ENCODE measurements at regions of chr15 and their contacts with region 1.

Region 1: DNA sequence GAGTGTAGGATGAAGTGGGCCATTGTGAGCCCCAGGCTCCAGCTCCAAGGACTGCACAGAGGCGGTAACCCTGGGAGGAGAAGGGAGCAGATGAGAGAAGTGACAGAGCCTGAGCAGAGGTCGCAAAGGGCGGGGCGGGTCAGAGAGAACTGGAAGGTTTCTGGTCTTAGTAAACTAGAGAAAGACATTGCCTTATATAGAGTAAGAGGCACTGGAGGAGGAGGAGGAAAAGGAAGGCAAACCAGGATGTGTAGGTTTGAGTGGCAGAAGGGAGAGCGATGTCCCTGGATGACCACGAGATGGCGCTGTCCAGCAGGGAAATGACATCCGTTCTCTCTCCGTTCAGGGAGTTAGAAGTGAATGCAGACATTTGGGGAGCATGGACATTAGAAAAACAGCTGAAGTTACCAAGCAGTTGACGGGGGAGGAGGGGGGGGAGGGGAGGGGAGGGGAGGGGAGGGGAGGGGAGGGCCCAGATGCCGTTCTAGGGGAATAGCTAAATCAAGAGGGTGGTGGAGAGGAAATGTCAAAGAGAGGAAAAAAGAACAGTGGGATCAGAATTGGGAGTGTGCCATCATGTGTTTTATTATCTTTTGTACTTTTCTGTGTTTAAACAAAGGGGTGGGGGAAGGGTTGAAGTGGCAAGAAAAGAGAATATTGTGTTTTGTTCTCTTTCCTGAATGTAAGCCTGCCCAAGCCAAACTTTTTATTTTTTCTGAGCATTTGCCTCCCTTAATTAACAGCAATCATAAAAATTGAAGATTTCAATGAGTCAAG is 48.8 kb downstream of the STARD5 start:
- DNase-seq: peak; percentile 62 to 92 (median 83)

Region 2: DNA sequence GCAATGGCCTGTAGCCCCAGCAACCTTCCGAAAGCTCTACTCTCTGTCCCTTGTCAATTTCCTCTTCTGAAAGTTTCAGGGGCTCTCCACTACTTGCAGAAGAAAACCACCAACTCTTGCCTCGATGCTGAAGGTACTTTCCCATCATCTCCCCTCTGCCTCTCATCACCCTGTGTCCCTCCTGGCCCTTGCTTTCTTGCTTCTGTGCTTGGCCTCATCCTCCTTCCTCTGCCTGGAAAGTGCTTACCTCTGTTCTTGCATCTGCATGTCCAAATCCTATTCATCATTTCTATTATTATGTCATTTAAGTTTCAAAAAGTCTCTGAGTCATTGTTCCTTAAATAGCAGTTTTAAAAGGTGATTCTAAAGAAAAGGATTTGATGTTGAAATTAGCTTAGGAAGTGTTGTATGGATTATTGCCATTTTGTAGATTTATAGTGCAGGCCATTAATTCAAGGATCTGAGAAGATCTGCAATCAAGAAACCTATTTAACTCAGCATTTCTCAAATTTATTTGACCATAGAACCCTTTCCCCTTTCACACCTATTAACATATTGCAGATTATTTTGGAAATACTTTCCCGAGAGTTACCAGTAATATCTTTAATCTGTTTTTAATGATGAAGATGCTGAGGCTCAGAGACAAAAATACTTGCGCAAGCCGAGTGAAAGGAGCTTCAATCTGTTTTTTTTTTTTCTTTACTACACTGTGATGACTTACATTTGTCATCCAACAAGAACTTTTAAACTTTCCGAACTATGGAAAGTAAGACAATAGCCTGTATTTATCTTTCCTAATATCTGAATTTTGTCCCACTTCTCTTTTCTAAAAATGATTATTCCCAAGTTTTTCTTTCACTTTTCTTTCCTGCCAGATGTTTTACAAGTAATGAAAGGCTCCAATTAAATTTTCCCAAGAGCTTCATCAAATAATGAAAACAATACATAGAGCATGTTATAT is 163.3 kb before region 1 on chr15:
- intact Hi-C with region 1: loop called (anchors 5 kb)
- DNase-seq: no peak

Region 3: DNA sequence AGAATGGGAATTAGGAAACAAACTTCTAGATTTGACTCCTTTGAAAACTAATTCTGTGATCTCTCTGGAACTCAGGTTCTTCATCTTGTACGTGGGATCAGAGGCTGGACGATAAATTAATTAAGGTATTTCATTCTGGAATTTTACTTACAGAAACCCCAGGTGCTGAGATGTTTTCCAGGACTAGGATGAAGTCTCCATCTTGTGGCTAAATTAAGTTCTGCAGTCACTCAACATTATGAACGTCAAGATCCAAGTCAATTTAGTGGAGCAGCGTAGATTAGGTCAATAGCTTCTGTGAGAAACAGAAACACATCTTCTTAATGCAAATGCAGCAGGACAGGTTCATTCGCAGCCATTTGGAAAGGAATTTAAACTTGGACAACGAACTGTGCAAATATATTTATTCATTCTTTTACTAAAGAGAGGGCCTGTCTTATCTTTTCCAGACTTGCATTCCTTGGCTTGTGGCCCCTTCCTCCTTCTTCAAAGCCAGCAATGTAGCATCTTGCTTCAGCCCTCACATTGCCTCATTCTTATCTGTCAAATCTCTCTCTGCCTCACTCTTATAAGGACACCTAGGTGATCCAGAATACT is 125.6 kb after region 1 on chr15:
- intact Hi-C with region 1: loop called (anchors 2 kb)
- DNase-seq: peak in 1 of 42 donors; percentile 28

Region 4: DNA sequence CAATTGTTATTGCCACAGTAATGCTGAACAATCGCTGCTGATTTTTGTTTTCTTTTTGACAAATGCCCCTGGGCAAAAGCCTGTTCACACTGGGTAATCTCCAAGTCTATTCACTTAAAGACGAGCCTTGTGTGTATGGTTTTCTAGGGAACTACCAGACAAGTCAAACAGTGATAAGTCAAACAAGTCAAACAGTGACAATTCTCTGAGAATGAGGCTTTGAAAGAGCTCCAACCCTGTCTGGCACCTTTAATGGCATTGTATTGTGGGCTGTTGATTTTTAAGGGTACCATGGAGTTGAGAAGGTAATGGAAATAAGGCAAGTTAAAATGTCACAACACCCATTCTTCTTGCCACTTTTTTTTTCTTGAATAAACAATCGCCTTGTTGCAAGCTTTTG is 158.3 kb after region 1 on chr15:
- intact Hi-C with region 1: no loop called
- DNase-seq: no peak